ENCODE measurements at regions of chr3 and their contacts with region 1.

Region 1: DNA sequence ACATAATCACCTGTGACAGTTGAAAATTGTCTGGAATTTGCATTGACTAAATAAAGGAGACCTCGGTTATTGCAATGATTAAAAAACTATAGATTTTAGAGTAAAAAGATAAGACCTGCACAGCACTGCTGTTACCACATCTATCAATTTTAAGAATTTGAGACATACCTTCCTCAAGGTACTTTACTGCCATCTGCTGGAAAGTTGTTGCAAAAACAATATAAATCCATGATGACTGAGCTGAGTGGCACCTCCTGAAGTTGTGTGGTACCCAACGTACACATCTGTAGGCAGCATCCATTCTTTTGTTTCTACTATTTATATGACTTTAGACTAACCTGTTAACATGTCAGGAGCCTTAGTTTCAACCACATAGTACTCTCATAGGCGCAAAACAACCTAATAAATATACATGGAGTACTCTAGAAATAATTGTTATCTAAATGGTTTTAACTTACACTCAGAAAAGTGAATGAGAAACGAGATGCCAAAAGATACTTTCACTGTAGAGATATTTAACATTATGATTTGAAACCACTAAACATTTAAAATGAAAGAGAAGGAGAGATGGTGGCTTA is 106.7 kb downstream of the GHSR start:
- DNase-seq: no peak
- ATAC-seq: peak; percentile 80
- H3K4me3 Mint-ChIP-seq: no peak overlapping the region
- H3K27ac Mint-ChIP-seq: no peak overlapping the region
- H3K4me1 Mint-ChIP-seq: no peaks in the 10 kb centered on the region
- H3K27me3 Mint-ChIP-seq: no peaks in the 10 kb centered on the region

Region 2: DNA sequence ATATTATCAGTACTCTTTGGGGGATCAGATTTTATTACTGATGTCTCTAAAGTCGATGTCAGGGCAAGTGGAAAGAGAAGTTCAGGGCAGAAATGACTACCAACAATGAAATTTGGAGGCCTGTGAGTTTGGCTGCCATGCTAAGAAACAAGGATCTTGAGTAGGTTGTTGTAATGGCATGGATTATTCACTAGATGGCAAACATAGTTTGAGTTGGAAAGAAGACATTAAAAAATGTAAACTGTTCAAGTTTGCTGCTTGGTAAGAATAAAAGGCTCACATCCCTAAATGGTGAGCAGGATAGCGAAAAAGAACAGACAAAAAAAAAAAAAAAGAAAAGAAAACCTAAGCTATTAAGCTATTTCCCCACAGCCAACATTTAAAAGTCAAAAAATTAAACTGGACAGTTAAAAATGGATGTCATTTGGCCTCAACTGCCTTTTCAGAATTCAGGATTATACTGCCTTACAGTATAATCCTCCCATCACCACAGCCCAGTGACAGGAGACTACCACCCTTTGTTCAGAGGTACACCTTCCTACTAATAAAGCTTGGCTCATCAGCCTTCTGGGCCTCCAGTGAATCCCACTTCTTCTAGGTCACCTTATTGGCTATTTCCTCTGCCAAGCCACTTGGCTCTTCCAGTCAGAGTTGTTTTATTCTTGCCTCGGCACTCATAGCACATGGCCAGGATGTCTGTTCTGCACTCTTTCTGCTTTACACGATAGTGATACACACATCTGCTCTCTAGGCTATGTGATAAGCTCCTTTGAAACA is 695.0 kb before region 1 on chr3:
- CTCF ChIA-PET with region 1: no interaction called
- POLR2A ChIA-PET with region 1: no interaction called
- intact Hi-C with region 1: loop called (anchors 1 to 5 kb)
- DNase-seq: no peak
- ATAC-seq: no peak
- H3K4me3 Mint-ChIP-seq: no peak overlapping the region
- H3K27ac Mint-ChIP-seq: no peak overlapping the region
- H3K4me1 Mint-ChIP-seq: no peaks in the 10 kb centered on the region
- H3K27me3 Mint-ChIP-seq: no peaks in the 10 kb centered on the region

Region 3: DNA sequence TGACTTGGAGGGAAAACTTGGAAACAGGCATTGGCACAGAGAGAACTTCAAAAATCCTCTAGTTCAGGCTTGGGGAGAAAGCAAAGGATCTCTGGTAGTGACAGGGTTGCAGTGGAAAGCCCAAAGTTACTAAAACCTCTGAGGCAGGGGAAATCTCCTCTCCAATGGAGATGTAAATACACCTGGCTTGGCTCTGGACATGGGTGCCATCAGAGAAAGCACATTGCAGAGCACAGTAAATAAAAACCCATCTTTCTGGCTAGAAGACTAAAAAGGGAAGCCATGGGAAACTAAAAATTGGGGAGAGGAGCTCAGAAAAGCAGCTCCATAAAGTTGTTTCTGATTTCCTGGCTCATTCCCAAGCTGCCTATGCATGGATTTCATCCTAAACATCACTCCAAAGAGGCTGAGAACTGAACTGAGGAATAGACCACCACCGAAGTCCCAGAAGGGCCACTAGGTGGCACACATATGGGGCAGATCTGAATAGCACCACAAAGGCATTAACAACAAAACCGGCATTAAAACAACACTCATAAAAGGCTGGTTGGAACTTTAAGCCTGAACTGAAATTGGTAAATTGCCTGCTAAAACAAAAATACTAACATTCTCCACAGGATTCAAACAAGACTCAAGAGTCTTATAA is 637.7 kb before region 1 on chr3:
- CTCF ChIA-PET with region 1: interaction called, 3 read pairs
- POLR2A ChIA-PET with region 1: no interaction called
- intact Hi-C with region 1: loop called in 1 of 2 experiments (anchors 2 kb)
- DNase-seq: peak; percentile 39
- ATAC-seq: no peak
- H3K4me3 Mint-ChIP-seq: no peak overlapping the region
- H3K27ac Mint-ChIP-seq: no peak overlapping the region
- H3K4me1 Mint-ChIP-seq: no peaks in the 10 kb centered on the region
- H3K27me3 Mint-ChIP-seq: peaks cover 8% of the 10 kb centered on the region

Region 4: DNA sequence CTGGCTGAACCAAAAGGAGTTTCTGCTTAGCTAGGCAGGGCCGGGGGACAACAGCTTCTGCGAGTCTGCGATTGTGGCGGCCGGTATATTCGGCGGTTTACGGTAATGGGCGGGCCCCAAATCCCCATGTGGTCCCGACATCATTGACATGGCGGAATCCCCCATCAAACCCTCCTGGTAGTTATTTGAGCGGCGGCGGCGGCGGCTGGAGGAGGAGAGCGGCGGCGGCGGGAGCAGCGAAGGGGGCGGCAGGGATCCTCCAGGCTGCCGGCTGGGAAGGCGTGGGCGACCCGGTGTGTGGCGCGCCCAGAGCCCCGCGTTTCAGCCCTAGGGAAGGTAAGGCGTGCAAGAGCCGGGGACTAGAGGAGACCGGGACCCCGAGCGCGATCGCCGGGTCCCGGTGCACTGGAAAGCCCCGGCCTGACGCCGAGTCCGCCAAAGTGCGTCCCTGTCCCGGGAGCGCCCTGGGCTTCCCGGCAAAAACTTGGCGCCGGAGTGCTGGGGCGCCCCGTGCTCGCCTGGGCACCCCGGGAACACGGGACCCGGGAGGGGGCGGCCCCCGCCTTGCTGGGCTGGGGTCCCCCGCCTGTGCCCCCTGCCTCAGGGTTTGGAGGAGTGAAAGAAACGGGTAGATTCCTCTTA is 302.0 kb before region 1 on chr3 and contains the start of gene FNDC3B:
- CTCF ChIA-PET with region 1: interaction called, 8 read pairs
- POLR2A ChIA-PET with region 1: no interaction called
- intact Hi-C with region 1: loop called (anchors 1 to 2 kb)
- DNase-seq: peak; percentile 95
- ATAC-seq: peak; percentile 93
- H3K4me3 Mint-ChIP-seq: peak within 1 kb of the TSS; percentile 86
- H3K27ac Mint-ChIP-seq: peak within 1 kb of the TSS; percentile 88
- H3K4me1 Mint-ChIP-seq: peaks cover 24% of the 10 kb centered on the region
- H3K27me3 Mint-ChIP-seq: peaks cover 2% of the 10 kb centered on the region
- total RNA-seq, gene FNDC3B: 10.5 to 14.2 TPM

Region 5: DNA sequence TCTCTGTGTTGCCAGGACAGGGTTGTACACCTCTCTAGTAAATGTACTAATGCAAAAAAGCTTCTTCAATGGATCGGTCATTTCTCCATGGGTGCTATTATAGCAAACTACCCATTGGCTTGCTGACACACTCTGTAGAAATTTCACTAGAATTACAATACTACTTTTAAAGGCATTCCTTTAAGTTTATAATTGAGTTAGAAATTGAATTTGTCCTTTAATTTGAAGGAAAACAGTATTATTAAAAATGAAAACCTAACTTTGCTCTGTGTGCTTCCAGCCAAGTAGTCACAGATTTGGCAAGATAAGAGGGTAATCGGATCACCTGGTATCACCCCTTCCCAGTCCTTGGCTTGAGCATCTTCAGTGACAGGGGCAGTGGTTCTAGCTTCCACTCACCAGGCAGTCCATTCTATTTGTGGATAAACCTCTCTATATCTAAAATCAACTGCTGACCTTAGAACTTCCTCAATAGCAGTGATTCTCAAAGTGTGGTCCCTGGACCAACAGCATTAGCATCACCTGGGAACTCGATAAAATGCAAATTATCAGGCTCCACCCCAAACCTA is 13.4 kb after region 1 on chr3:
- CTCF ChIA-PET with region 1: interaction called, 15 read pairs
- POLR2A ChIA-PET with region 1: no interaction called
- intact Hi-C with region 1: no loop called
- DNase-seq: no peak
- ATAC-seq: no peak
- H3K4me3 Mint-ChIP-seq: no peak overlapping the region
- H3K27ac Mint-ChIP-seq: no peak overlapping the region
- H3K4me1 Mint-ChIP-seq: no peaks in the 10 kb centered on the region
- H3K27me3 Mint-ChIP-seq: no peaks in the 10 kb centered on the region

Region 6: GRCh38 chr3:172530566-172530965 is 189.0 kb after region 1 on chr3:
- CTCF ChIA-PET with region 1: no interaction called
- POLR2A ChIA-PET with region 1: no interaction called
- intact Hi-C with region 1: no loop called
- DNase-seq: peak; percentile 24
- ATAC-seq: peak; percentile 78
- H3K4me3 Mint-ChIP-seq: peak overlapping the region; percentile 15
- H3K27ac Mint-ChIP-seq: peak overlapping the region; percentile 48
- H3K4me1 Mint-ChIP-seq: peaks cover 22% of the 10 kb centered on the region
- H3K27me3 Mint-ChIP-seq: no peaks in the 10 kb centered on the region

Region 7: DNA sequence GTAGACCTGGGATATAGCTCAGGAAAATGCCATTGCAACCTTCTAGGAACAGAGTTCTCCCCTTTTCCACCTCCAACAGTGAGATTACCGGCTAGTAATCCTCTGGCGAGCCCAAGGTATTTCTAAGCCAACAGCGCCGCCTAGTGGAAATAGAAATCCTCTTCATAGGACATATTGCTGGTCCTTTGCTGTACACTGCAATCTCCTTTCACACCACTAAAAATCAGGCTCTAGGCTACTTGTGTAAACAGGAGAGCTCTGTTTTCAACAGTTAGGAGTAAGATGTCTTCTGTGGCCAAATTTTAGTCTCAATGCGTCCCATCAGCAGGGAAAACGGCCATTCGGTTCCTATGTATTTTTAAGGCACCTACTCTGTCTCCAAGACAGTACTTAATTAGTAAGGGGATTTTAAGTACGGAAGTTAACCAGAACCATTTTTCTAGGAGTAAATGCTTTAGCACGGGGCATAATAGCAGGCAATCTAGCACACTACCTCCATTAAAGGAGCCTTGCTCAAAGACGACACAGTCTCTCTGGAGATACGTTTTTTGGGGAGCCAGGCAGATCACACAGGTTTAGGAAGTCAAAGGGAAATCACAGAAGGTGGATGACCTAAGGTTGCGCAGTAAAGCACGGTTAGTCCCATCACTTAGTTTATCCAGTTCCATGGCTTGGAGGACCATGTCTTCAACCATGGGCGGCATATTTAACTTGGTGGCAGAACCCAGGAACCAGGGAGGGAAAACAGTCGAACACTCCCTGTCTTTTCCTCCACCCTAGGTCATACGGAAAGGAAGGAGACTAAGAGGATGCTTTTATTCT is 325.5 kb after region 1 on chr3:
- CTCF ChIA-PET with region 1: interaction called, 13 read pairs
- POLR2A ChIA-PET with region 1: no interaction called
- intact Hi-C with region 1: no loop called
- DNase-seq: peak; percentile 88
- ATAC-seq: peak; percentile 96
- H3K4me3 Mint-ChIP-seq: no peak overlapping the region
- H3K27ac Mint-ChIP-seq: no peak overlapping the region
- H3K4me1 Mint-ChIP-seq: peaks cover 5% of the 10 kb centered on the region
- H3K27me3 Mint-ChIP-seq: no peaks in the 10 kb centered on the region

Measured in activated CD4-positive, alpha-beta T cell treated with anti-CD3 and anti-CD28 coated beads for 36 hours (primary cell).